Caco-2 (cell line): ENCODE measurements at regions of chr14 and their contacts with region 1.

Region 1: DNA sequence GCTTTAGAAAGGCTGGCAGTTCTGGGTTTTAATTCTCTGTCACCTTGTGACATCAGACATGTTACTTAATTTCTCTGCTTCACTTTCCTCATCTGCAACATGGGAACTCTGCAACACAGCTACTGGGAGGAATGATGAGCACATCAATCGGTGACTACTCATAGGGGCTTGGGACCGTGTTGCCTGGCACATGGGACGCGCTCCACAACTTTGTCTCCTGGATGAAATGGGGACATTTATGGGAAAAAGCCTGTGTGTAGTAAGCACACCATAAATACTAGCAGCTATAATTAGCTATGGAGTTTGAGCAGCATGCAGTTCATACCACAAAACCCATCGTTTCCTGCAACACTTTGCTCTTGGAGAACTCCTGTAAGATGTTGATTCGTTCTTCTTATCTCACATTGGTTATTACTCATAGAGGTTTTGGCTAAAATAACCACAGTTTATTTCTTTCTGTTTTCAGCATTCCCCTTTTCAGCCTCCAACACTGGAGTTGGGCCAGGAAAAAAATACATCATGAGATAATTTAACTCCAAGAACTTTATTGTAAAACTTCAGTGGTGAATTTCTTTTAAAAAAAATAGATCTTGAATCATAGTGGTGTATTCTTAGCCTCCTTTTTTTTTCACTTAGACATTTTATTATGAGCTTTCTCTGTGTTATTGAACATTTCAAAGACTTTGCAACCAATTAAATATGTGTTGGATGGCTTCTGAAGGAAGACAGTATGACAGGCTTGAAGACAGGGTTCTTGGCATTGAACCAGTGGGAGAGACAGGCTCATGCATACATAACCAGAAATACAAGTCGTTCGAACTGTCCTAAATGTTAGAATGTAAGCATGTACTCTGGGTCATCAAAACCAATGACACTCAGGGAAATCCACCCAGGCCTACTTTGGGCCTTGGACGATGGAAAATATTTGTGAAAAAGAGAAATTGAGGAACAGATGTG is 72.7 kb downstream of the RIN3 start:
- DNase-seq: no peak
- H3K4me3 ChIP-seq: no peak overlapping the region
- H3K4me3 Mint-ChIP-seq: no peak overlapping the region
- H3K27ac Mint-ChIP-seq: no peak overlapping the region
- H3K4me1 ChIP-seq: no peaks in the 10 kb centered on the region
- H3K4me1 Mint-ChIP-seq: no peaks in the 10 kb centered on the region
- H3K27me3 ChIP-seq: no peaks in the 10 kb centered on the region
- H3K27me3 Mint-ChIP-seq: no peaks in the 10 kb centered on the region
- CTCF ChIP-seq: no peak

Region 2: GRCh38 chr14:92680781-92681650 is 94.8 kb after region 1 on chr14:
- CTCF ChIA-PET with region 1: no interaction called
- POLR2A ChIA-PET with region 1: no interaction called
- intact Hi-C with region 1: loop called (anchors 1 kb)
- DNase-seq: peak; percentile 69 to 75
- H3K4me3 ChIP-seq: no peak overlapping the region
- H3K4me3 Mint-ChIP-seq: no peak overlapping the region
- H3K27ac Mint-ChIP-seq: no peak overlapping the region
- H3K4me1 ChIP-seq: no peaks in the 10 kb centered on the region
- H3K4me1 Mint-ChIP-seq: no peaks in the 10 kb centered on the region
- H3K27me3 ChIP-seq: no peaks in the 10 kb centered on the region; the same call in 1 of the 2 replicates
- H3K27me3 Mint-ChIP-seq: no peaks in the 10 kb centered on the region
- CTCF ChIP-seq: peak; percentile 90 to 93